Pancreas (tissue), 10 donors: ENCODE measurements at regions of chr16 and their contacts with region 1.

Region 1: DNA sequence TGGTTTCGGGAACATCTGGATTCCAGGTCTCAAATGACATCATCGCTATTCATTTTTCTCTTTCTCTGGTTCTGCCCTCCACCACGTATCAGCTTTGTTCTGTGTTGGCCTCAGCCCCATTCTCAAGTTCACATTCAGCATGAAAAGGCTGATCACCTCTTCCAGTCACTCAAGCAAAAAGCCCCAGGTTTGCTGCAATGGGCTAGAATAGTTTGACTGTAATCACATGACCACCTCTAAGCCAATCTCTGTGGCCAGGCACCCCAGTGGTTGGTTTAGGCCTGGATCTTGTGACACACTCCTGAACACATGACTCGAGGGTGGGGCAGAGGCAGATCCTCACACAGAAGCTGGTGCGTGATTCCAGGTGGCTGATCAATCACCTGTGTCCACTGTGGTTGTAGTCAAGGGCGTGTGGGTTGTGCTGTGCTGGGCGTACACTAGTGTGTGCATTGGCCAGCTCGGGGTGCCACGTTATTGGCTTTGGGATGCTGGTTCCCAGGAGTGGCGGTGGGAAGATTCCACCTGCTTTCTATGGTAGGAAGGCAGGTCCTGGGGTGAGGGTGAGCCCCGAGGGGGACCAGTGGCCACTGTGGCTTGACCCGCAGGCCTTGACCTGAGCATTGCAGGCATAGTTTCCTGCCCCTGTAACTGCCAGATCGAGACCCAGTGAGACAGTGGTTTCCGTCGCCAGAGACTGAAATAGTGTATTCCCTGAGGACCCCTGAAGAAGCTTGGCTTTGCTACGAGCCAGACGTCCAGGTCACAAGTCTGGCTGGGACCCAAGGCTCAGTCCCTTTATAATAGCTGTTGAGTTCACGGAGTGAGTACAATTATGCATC is 12.0 kb downstream of the EEF2K start:
- DNase-seq: no peak
- ATAC-seq: peak in 1 of 4 donors; percentile 34
- H3K4me3 ChIP-seq: no peak overlapping the region
- H3K27ac ChIP-seq: no peak overlapping the region
- H3K4me1 ChIP-seq: peaks cover 0 to 11% (median 8%) of the 10 kb centered on the region in 3 donors
- H3K27me3 ChIP-seq: no peaks in the 10 kb centered on the region
- CTCF ChIP-seq: no peak

Region 2: GRCh38 chr16:22161999-22162655 is 56.0 kb before region 1 on chr16 and contains the start of gene SDR42E2:
- intact Hi-C with region 1: no loop called
- DNase-seq: peak in 5 of 6 donors; percentile 16 to 76 (median 23)
- ATAC-seq: peak; percentile 75 to 94 (median 80)
- H3K4me3 ChIP-seq: peak within 1 kb of the TSS in 1 of 4 donors; percentile 13
- H3K27ac ChIP-seq: no peak within 1 kb of the TSS
- H3K4me1 ChIP-seq: no peaks in the 10 kb centered on the region
- H3K27me3 ChIP-seq: peaks cover 0 to 4% (median 0%) of the 10 kb centered on the region in 4 donors
- CTCF ChIP-seq: no peak
- total RNA-seq, gene SDR42E2: not detected

Region 3: DNA sequence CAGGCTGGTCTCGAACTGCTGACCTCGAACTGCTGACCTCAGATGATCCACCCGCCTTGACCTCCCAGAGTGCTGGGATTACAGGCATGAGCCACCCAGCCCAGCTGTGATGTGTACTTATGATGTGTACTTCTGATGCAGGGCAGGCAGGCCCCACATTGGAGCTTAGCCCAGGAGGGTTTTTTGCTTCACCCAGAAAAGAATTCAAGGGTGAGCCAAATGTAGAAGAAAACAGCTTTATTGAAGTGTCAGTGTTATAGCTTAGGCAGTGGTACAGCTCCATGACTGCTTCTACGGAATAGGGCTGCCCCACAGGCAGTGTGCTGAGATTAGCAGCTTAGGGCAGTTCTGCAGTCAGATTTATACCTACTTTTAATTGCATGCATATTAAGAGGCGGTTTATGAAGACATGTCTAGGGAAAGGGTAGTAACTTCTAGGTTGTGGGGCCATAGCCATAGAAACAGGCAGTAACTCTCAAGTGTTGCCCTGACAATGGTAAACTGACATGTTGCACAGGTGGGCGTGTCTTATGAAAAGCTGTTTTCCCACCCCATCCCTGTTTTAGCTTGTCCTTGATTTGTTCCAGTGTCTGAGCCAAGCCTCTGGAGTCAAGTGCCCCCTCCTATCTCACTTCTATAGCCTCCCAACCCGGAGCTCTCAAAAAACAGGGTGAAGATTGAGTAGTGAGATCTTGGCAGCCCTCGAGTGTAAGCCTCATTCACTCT is 54.9 kb after region 1 on chr16:
- intact Hi-C with region 1: loop called in 1 of 3 experiments (anchors 10 kb)
- DNase-seq: no peak
- ATAC-seq: peak in 2 of 4 donors; percentile 11 to 35
- H3K4me3 ChIP-seq: no peak overlapping the region
- H3K27ac ChIP-seq: no peak overlapping the region
- H3K4me1 ChIP-seq: no peaks in the 10 kb centered on the region
- H3K27me3 ChIP-seq: no peaks in the 10 kb centered on the region
- CTCF ChIP-seq: no peak

Region 4: DNA sequence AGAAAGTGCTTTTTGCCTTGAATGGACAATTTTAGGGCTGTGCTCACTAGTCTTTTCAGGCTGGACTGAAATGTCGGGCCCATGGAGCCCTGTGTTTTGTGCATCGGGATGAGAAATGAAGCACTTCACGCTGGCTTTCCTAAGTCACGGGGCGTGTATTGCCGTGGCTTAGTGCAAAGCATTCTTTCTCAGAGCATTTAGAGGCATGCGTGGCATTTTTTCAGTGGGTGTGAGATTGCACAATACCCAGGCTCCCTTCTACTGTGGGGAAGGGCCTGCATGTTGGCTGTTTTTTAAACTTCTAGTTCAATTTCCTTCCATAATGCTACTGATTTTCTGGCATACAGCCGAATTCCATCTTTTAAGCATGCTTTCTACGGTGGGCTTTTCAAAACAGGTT is 66.5 kb after region 1 on chr16:
- intact Hi-C with region 1: loop called in 2 of 3 experiments (anchors 10 kb)
- DNase-seq: no peak
- ATAC-seq: no peak
- H3K4me3 ChIP-seq: no peak overlapping the region
- H3K27ac ChIP-seq: no peak overlapping the region
- H3K4me1 ChIP-seq: no peaks in the 10 kb centered on the region
- H3K27me3 ChIP-seq: no peaks in the 10 kb centered on the region
- CTCF ChIP-seq: no peak